ENCODE measurements at regions of chr9 and their contacts with region 1.

Region 1: DNA sequence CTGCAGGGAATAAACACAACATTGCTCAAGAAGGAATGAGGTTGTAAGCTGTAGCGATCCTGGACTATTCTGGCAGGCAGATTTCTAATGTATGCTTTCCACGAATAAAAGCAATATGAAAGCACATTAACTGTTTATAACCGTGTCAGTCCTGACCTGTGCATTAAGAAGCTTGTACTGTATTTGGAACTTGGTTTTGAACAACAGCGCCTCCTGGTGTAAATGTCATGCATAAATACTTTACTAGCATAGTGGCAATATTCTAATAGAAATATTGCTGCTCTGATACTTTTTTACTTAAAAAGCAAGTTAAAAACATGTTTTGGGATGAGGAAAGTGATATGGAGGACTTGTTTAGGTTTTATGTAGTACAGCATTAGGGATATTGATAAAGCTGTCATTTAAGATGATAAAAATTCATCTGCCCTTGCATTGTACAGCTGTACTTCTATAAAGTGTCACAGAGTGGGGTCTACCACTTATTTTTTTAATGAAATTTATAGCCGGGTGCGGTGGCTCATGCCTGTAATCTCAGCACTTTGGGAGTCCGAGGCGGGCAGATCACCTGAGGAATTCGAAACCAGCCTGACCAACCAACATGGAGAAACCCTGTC is 70.7 kb upstream of the GNE start:
- DNase-seq: peak; percentile 58
- H3K4me3 ChIP-seq: no peak overlapping the region
- H3K27ac ChIP-seq: no peak overlapping the region
- H3K4me1 ChIP-seq: peaks cover 13% of the 10 kb centered on the region
- H3K27me3 ChIP-seq: no peaks in the 10 kb centered on the region
- CTCF ChIP-seq: peak; percentile 78 to 83

Region 2: DNA sequence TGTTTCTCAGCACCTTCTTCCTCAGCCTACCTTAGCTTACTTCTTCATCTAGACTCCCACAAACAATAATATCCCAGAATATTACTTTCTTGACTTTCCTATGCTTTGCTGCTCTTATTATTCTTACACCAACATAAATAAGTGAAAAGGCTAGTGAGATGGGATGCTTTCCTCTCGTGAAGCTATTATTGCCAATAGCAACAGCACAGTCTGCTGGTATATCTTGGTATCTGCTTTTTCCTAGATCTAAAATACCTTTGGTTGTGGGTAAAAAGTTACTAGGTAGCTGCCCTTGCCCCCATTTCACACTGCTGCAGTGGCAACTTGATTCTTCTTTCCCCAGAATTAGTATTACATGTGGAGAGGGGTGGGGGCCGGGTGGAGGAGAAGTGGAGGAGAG is 218.5 kb before region 1 on chr9:
- CTCF ChIA-PET with region 1: no interaction called
- dilution Hi-C with region 1: no loop called
- in situ Hi-C with region 1: no loop called
- intact Hi-C with region 1: no loop called
- DNase-seq: no peak
- H3K4me3 ChIP-seq: no peak overlapping the region
- H3K27ac ChIP-seq: no peak overlapping the region
- H3K4me1 ChIP-seq: no peaks in the 10 kb centered on the region
- H3K27me3 ChIP-seq: no peaks in the 10 kb centered on the region
- CTCF ChIP-seq: peak; percentile 9 to 39

Region 3: DNA sequence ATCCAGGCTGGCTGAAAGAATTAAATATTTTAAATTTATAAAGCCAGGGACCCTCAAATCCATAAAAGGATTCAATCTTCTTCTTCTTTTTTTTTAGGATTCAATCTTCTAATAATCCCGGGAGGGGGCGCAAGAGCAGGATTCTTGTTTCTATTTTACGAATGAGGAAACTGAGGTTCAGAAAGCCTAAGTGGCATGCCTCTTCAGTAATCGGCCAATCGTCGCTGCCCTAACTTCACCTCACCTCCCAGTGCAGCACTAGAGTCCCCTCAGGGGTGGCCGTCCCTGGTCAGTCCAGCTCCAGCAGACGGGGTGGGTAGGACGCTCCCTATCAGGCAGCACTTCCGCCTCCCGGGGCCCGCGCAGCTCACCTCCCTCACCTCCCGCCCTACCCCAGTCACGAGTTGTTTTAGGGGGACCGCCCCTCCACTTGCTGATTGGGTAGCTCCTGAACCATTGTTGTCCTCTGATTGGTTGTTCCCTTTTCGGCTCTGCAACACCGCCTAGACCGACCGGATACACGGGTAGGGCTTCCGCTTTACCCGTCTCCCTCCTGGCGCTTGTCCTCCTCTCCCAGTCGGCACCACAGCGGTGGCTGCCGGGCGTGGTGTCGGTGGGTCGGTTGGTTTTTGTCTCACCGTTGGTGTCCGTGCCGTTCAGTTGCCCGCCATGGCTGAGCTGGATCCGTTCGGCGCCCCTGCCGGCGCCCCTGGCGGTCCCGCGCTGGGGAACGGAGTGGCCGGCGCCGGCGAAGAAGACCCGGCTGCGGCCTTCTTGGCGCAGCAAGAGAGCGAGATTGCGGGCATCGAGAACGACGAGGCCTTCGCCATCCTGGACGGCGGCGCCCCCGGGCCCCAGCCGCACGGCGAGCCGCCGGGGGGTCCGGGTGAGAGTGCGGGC is 138.3 kb before region 1 on chr9 and contains the start of gene CLTA:
- CTCF ChIA-PET with region 1: interaction called, 3 read pairs
- dilution Hi-C with region 1: no loop called
- in situ Hi-C with region 1: no loop called
- intact Hi-C with region 1: loop called (anchors 1 kb)
- DNase-seq: peak; percentile 99
- H3K4me3 ChIP-seq: peak within 1 kb of the TSS; percentile 65 to 97 (median 72)
- H3K27ac ChIP-seq: peak within 1 kb of the TSS; percentile 89
- H3K4me1 ChIP-seq: peaks cover 34% of the 10 kb centered on the region
- H3K27me3 ChIP-seq: no peaks in the 10 kb centered on the region
- CTCF ChIP-seq: peak; percentile 43 to 62
- total RNA-seq, gene CLTA: 130 to 217 TPM

Region 4: GRCh38 chr9:36250079-36250478 is 78.8 kb before region 1 on chr9:
- CTCF ChIA-PET with region 1: interaction called, 5 read pairs
- dilution Hi-C with region 1: no loop called
- in situ Hi-C with region 1: loop called (anchors 5 kb)
- intact Hi-C with region 1: loop called (anchors 1 kb)
- DNase-seq: peak; percentile 57
- H3K4me3 ChIP-seq: no peak overlapping the region
- H3K27ac ChIP-seq: no peak overlapping the region
- H3K4me1 ChIP-seq: peaks cover 8% of the 10 kb centered on the region
- H3K27me3 ChIP-seq: no peaks in the 10 kb centered on the region
- CTCF ChIP-seq: no peak

Region 5: DNA sequence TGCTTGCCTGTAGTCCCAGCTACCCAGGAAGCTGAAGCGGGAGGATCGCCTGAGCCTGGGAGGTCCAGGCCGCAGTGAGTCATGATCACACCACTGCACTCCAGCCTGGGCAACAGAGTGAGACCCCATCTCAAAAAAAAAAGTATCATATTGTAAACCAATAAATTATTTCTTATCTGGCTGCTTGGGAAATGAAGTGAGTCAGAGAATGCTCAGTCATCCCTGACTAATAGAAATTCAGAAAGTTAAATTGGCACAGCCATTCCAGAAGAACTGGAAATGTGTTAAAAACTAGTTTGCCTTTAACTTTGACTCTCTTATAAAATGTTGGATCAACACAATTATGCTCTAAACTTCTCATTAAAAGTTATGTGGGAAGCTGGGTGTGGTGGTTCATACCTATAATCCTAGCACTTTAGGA is 60.9 kb before region 1 on chr9:
- CTCF ChIA-PET with region 1: no interaction called
- dilution Hi-C with region 1: loop called (anchors 5 kb)
- in situ Hi-C with region 1: no loop called
- intact Hi-C with region 1: no loop called
- DNase-seq: peak; percentile 71
- H3K4me3 ChIP-seq: no peak overlapping the region
- H3K27ac ChIP-seq: peak overlapping the region; percentile 19
- H3K4me1 ChIP-seq: peaks cover 6% of the 10 kb centered on the region
- H3K27me3 ChIP-seq: no peaks in the 10 kb centered on the region
- CTCF ChIP-seq: no peak

Region 6: GRCh38 chr9:36317764-36318163 is 11.1 kb before region 1 on chr9:
- CTCF ChIA-PET with region 1: interaction called, 12 read pairs
- dilution Hi-C with region 1: no loop called
- in situ Hi-C with region 1: no loop called
- intact Hi-C with region 1: no loop called
- DNase-seq: peak; percentile 99
- H3K4me3 ChIP-seq: no peak overlapping the region
- H3K27ac ChIP-seq: peak overlapping the region; percentile 82
- H3K4me1 ChIP-seq: peaks cover 55% of the 10 kb centered on the region
- H3K27me3 ChIP-seq: no peaks in the 10 kb centered on the region
- CTCF ChIP-seq: no peak